ENCODE measurements at regions of chr2 and their contacts with region 1.

Region 1: DNA sequence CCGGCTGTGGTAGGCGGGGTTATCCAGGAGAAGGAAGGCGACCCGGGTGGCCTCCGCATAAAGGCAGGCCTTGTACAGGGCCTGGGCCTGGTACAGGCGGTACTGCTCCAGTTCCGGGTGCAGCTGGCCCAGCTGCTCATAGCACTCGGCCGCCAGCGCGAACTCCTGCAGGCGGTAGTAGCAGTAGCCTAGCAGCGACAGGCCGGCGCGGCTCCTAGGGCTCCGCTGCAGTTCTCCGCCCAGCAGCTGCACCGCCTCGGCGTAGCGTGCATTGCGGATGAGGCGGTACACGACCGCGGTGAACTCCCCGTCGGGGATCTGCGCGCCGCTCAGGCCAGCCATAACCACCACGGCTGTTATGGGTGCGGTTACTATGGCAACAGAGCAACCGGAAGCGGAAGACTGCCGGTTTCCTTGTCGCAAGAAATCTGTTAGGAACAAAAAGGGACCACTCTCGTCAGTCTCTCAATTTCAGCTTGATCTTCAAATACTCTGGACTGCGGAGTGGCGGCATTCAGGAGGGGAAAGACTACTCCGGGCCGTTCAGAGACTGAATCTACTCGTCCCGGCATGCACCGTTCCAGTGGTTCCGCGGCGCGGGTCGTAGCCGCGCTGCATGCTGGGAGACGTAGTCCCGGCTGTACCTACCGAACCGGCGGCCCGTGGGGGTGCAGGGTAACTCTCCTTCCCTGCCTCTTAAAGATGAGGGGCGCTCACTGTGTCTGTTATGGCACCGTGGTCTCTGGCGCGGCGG is 160.0 kb downstream of the AGPS start:
- DNase-seq: peak; percentile 82 to 96 (median 94)
- ATAC-seq: peak; percentile 94
- H3K4me3 ChIP-seq: peak overlapping the region; percentile 89
- H3K4me3 Mint-ChIP-seq: peak overlapping the region; percentile 87 to 99 (median 94)
- H3K27ac ChIP-seq: peak overlapping the region; percentile 100
- H3K27ac Mint-ChIP-seq: peak overlapping the region; percentile 98 to 100 (median 99)
- H3K4me1 ChIP-seq: no peaks in the 10 kb centered on the region
- H3K4me1 Mint-ChIP-seq: peaks cover 4 to 29% (median 14%) of the 10 kb centered on the region in 7 donors
- H3K27me3 ChIP-seq: no peaks in the 10 kb centered on the region
- H3K27me3 Mint-ChIP-seq: peaks cover 0 to 14% (median 4%) of the 10 kb centered on the region in 5 donors

Region 2: GRCh38 chr2:176269319-176270099 is 1283.1 kb before region 1 on chr2 and contains the start of gene MTX2:
- CTCF ChIA-PET with region 1: no interaction called
- POLR2A ChIA-PET with region 1: no interaction called
- intact Hi-C with region 1: loop called in 1 of 2 experiments (anchors 10 kb)
- DNase-seq: peak; percentile 48 to 80 (median 75)
- ATAC-seq: peak; percentile 92
- H3K4me3 ChIP-seq: peak within 1 kb of the TSS; percentile 97
- H3K4me3 Mint-ChIP-seq: peak within 1 kb of the TSS; percentile 95 to 99 (median 97)
- H3K27ac ChIP-seq: peak within 1 kb of the TSS; percentile 84
- H3K27ac Mint-ChIP-seq: peak within 1 kb of the TSS; percentile 70 to 97 (median 92)
- H3K4me1 ChIP-seq: peaks cover 7 to 8% of the 10 kb centered on the region in 2 donors
- H3K4me1 Mint-ChIP-seq: peaks cover 16 to 46% (median 39%) of the 10 kb centered on the region in 7 donors
- H3K27me3 ChIP-seq: no peaks in the 10 kb centered on the region
- H3K27me3 Mint-ChIP-seq: peaks cover 0 to 19% (median 9%) of the 10 kb centered on the region in 5 donors
- total RNA-seq, gene MTX2: 6.6 to 14.3 (median 9.3) TPM

Region 3: DNA sequence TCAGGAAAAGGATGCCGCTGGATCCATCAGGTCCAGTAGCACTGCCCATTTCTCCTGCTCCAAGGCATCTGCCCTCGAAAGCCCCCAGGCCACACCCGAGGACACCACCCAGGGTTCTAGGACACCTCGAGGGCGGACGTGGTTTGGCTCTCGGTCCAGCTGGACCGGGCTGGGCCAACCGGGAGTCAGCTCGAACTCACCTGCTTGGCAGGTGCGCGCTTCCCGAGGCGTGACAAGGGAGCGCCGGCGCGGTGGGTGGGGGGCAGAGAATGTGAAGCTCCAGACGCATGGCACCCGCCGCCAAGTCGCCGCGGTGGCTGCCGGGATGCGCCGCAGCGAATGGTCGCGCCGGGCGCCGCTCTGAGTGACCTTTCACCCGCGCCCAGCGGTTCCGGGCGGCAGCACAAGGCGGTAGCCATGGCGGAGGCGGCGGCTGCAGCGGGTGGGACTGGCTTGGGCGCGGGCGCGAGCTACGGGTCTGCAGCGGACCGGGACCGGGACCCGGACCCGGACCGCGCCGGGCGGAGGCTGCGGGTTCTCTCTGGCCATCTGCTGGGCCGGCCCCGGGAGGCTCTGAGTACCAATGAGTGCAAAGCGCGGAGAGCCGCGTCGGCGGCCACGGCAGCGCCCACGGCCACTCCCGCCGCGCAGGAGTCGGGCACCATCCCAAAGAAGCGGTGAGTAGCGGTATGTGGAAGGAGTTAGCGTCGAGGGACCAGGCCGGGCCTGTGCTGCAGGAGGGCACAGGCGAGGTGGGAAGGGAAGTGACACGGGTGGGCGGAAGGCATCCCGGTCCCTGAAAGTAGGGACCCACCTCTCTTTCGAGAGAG is 160.0 kb before region 1 on chr2 and contains the start of gene AGPS:
- CTCF ChIA-PET with region 1: no interaction called
- POLR2A ChIA-PET with region 1: no interaction called
- intact Hi-C with region 1: loop called (anchors 1 to 2 kb)
- DNase-seq: peak; percentile 62 to 86 (median 71)
- ATAC-seq: peak; percentile 94
- H3K4me3 ChIP-seq: peak within 1 kb of the TSS; percentile 67
- H3K4me3 Mint-ChIP-seq: peak within 1 kb of the TSS; percentile 81 to 99 (median 96)
- H3K27ac ChIP-seq: peak within 1 kb of the TSS; percentile 53
- H3K27ac Mint-ChIP-seq: peak within 1 kb of the TSS; percentile 85 to 97 (median 92)
- H3K4me1 ChIP-seq: peaks cover 20 to 23% of the 10 kb centered on the region in 2 donors
- H3K4me1 Mint-ChIP-seq: peaks cover 48 to 74% (median 61%) of the 10 kb centered on the region in 7 donors
- H3K27me3 ChIP-seq: no peaks in the 10 kb centered on the region
- H3K27me3 Mint-ChIP-seq: no peaks in the 10 kb centered on the region
- total RNA-seq, gene AGPS: 21.8 to 60.4 (median 26.1) TPM

Region 4: GRCh38 chr2:177530561-177530960 is 22.0 kb before region 1 on chr2:
- CTCF ChIA-PET with region 1: no interaction called
- POLR2A ChIA-PET with region 1: no interaction called
- intact Hi-C with region 1: no loop called
- DNase-seq: no peak
- ATAC-seq: no peak
- H3K4me3 ChIP-seq: no peak overlapping the region
- H3K4me3 Mint-ChIP-seq: no peak overlapping the region
- H3K27ac ChIP-seq: no peak overlapping the region
- H3K27ac Mint-ChIP-seq: no peak overlapping the region
- H3K4me1 ChIP-seq: no peaks in the 10 kb centered on the region
- H3K4me1 Mint-ChIP-seq: peaks cover 0 to 3% (median 0%) of the 10 kb centered on the region in 7 donors
- H3K27me3 ChIP-seq: no peaks in the 10 kb centered on the region
- H3K27me3 Mint-ChIP-seq: no peaks in the 10 kb centered on the region

Region 5: DNA sequence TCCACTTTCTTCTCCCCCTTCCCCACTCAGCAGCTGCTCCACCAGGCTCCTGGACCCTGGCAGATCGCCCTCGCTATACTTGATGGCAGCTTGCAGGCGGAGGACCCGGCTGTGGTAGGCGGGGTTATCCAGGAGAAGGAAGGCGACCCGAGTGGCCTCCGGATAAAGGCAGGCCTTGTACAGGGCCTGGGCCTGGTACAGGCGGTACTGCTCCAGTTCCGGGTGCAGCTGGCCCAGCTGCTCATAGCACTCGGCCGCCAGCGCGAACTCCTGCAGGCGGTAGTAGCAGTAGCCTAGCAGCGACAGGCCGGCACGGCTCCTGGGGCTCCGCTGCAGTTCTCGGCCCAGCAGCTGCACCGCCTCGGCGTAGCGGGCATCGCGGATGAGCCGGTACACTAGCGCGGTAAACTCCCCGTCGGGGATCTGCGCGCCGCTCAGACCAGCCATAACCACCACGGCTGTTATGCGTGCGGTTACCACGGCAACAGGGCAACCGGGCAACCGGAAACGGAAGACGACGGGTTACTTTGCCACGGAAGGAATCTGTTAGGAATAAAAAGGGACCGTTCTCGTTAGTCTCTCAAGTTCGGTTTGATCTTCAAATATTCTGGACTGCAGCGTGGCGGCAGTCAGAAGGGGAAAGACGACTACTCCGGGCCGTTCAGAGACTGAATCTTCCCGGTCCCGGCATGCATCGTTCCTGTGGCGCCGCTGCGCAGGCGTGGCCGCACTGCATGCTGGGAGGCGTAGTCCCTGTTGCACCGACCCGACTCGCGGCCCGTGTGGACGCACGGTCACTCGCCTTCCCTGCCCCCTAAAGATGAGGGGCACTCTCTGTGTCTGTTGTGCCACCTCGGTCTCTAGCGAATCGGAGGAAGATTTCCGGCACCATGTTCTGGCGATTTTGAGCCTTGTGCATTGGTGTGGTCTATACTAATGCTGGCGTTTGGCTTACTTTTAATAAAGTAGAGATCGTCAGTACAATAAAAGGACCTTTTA is 66.0 kb after region 1 on chr2:
- CTCF ChIA-PET with region 1: interaction called, 3 read pairs
- POLR2A ChIA-PET with region 1: interaction called, 4 read pairs
- intact Hi-C with region 1: loop called (anchors 1 kb)
- DNase-seq: peak; percentile 86 to 93 (median 91)
- ATAC-seq: peak; percentile 95
- H3K4me3 ChIP-seq: peak overlapping the region; percentile 86
- H3K4me3 Mint-ChIP-seq: peak overlapping the region; percentile 80 to 99 (median 96)
- H3K27ac ChIP-seq: peak overlapping the region; percentile 96
- H3K27ac Mint-ChIP-seq: peak overlapping the region; percentile 98 to 100 (median 99)
- H3K4me1 ChIP-seq: no peaks in the 10 kb centered on the region
- H3K4me1 Mint-ChIP-seq: peaks cover 0 to 15% (median 9%) of the 10 kb centered on the region in 7 donors
- H3K27me3 ChIP-seq: no peaks in the 10 kb centered on the region
- H3K27me3 Mint-ChIP-seq: peaks cover 0 to 35% (median 9%) of the 10 kb centered on the region in 5 donors

Region 6: GRCh38 chr2:177763532-177764265 is 211.1 kb after region 1 on chr2:
- CTCF ChIA-PET with region 1: no interaction called
- POLR2A ChIA-PET with region 1: no interaction called
- intact Hi-C with region 1: loop called in 1 of 2 experiments (anchors 2 kb)
- DNase-seq: peak; percentile 51 to 75 (median 68)
- ATAC-seq: peak; percentile 95
- H3K4me3 ChIP-seq: peak overlapping the region; percentile 20
- H3K4me3 Mint-ChIP-seq: peak overlapping the region in 8 of 10 donors; percentile 20 to 55 (median 30)
- H3K27ac ChIP-seq: no peak overlapping the region
- H3K27ac Mint-ChIP-seq: peak overlapping the region in 1 of 9 donors; percentile 42
- H3K4me1 ChIP-seq: peaks cover 0 to 4% of the 10 kb centered on the region in 2 donors
- H3K4me1 Mint-ChIP-seq: peaks cover 0 to 11% (median 6%) of the 10 kb centered on the region in 7 donors
- H3K27me3 ChIP-seq: no peaks in the 10 kb centered on the region
- H3K27me3 Mint-ChIP-seq: peaks cover 10 to 28% (median 24%) of the 10 kb centered on the region in 5 donors

Region 7: GRCh38 chr2:178450774-178451525 is 898.4 kb after region 1 on chr2 and contains the starts of genes PJVK and PRKRA:
- CTCF ChIA-PET with region 1: no interaction called
- POLR2A ChIA-PET with region 1: no interaction called
- intact Hi-C with region 1: loop called in 1 of 2 experiments (anchors 2 kb)
- DNase-seq: peak; percentile 92 to 99 (median 93)
- ATAC-seq: peak; percentile 94
- H3K4me3 ChIP-seq: peak within 1 kb of the TSS; percentile 94
- H3K4me3 Mint-ChIP-seq: peak within 1 kb of the TSS; percentile 90 to 96 (median 90)
- H3K27ac ChIP-seq: peak within 1 kb of the TSS; percentile 100
- H3K27ac Mint-ChIP-seq: peak within 1 kb of the TSS; percentile 88 to 98 (median 95)
- H3K4me1 ChIP-seq: peaks cover 12 to 25% of the 10 kb centered on the region in 2 donors
- H3K4me1 Mint-ChIP-seq: peaks cover 12 to 36% (median 30%) of the 10 kb centered on the region in 7 donors
- H3K27me3 ChIP-seq: no peaks in the 10 kb centered on the region
- H3K27me3 Mint-ChIP-seq: peaks cover 0 to 9% (median 0%) of the 10 kb centered on the region in 5 donors
- total RNA-seq, gene PJVK: 2.1 to 6.3 (median 3.8) TPM
- total RNA-seq, gene PRKRA: 40.8 to 113 (median 59.4) TPM

Region 8: DNA sequence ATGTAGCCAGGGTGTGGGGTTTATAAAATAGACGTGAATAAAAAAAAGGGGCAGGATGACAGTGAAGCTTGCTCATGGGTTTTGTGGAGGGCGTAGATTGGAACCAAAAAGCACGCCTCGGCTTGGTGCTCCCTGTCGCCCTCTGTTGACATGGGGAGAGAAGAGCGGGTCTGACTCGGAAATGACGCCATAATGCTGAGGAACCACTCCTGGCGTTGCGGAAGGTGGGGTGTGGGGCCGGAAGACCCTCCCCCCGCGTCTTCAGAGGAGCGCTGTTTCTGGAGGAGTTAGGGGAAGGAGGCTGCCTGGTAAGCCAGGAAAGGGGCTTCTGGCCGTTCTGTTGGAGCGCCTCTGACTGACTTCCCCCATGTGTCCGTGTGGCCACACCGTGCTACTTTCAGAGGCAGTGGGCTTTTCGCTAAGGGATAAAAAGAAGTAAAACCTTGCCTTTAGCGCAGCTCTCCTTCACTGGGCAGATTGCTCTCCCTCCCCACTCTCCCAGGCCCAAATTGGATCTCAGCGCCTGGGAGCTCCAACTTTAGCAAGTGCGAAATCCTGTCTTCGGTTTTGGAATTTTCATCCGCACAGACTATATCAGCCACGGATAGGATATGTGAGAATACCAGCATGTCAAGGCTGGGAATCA is 970.5 kb after region 1 on chr2:
- CTCF ChIA-PET with region 1: no interaction called
- POLR2A ChIA-PET with region 1: no interaction called
- intact Hi-C with region 1: loop called in 1 of 2 experiments (anchors 5 kb)
- DNase-seq: peak; percentile 65 to 85 (median 80)
- ATAC-seq: peak; percentile 100
- H3K4me3 ChIP-seq: peak overlapping the region; percentile 93
- H3K4me3 Mint-ChIP-seq: peak overlapping the region; percentile 84 to 96 (median 94)
- H3K27ac ChIP-seq: peak overlapping the region; percentile 75
- H3K27ac Mint-ChIP-seq: peak overlapping the region; percentile 80 to 96 (median 91)
- H3K4me1 ChIP-seq: peaks cover 7 to 10% of the 10 kb centered on the region in 2 donors
- H3K4me1 Mint-ChIP-seq: peaks cover 14 to 58% (median 22%) of the 10 kb centered on the region in 7 donors
- H3K27me3 ChIP-seq: no peaks in the 10 kb centered on the region
- H3K27me3 Mint-ChIP-seq: no peaks in the 10 kb centered on the region

Measured in naive thymus-derived CD4-positive, alpha-beta T cell (primary cell).